ENCODE measurements at regions of chr1 and their contacts with region 1.

Region 1: DNA sequence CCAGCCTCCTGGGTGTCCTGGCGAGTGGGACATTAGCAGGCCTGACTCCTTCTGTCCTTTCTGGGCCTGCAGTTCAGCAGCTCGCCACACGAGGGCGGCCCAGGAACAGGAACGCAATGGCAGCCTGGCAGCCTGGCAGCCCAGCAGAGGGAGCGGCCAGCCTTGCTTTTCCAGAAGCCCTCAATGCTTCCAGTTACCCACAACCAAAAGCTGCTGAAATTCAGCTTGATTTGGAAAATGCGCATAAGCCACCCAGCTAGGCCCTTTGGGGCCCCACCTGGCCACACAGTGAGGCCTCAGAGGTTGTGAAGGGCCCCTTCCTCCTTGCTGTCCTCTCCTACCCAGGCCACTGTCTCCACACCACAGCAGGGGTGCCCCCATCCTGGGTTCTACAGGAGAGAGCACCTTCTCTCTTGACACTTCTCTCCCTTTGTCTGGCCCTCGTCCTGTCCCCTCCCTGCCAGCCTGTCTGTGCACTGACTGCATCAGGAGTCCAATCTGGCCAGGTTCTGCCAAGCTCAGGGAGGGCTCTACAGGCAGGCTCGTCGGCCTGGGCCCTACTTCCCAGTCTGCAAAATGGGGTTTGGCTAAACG is 103.4 kb upstream of the VAMP3 start:
- DNase-seq: peak; percentile 62
- H3K4me3 ChIP-seq: no peak overlapping the region
- H3K27ac ChIP-seq: no peak overlapping the region
- H3K4me1 ChIP-seq: peaks cover 4% of the 10 kb centered on the region
- H3K27me3 ChIP-seq: no peaks in the 10 kb centered on the region
- CTCF ChIP-seq: peak; percentile 99 to 100

Region 2: GRCh38 chr1:7630378-7630777 is 37.3 kb before region 1 on chr1:
- CTCF ChIA-PET with region 1: no interaction called
- dilution Hi-C with region 1: no loop called
- in situ Hi-C with region 1: no loop called
- intact Hi-C with region 1: no loop called
- DNase-seq: no peak
- H3K4me3 ChIP-seq: no peak overlapping the region
- H3K27ac ChIP-seq: no peak overlapping the region
- H3K4me1 ChIP-seq: no peaks in the 10 kb centered on the region
- H3K27me3 ChIP-seq: peaks cover 5% of the 10 kb centered on the region
- CTCF ChIP-seq: no peak

Region 3: DNA sequence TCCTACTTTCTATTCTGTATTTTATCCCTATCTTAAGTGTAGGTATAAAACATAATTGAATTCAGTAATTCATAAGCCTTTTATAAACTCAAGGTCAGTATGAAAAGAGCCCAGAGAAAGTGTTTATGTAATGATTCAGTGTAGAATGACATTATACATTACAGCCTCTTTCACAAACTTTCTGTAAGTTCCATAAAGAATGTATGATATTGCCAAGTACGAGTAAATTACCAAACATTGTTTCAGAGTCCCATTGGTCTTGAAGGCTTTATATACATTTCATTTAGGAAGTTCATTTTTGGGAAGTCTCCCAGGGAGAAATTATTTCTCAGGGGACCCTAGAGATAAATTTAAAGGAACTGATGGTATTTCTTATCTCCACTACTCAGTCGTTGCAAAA is 65.6 kb after region 1 on chr1:
- CTCF ChIA-PET with region 1: interaction called, 10 read pairs
- dilution Hi-C with region 1: no loop called
- in situ Hi-C with region 1: no loop called
- intact Hi-C with region 1: no loop called
- DNase-seq: no peak
- H3K4me3 ChIP-seq: no peak overlapping the region
- H3K27ac ChIP-seq: no peak overlapping the region
- H3K4me1 ChIP-seq: no peaks in the 10 kb centered on the region
- H3K27me3 ChIP-seq: no peaks in the 10 kb centered on the region
- CTCF ChIP-seq: no peak

Region 4: DNA sequence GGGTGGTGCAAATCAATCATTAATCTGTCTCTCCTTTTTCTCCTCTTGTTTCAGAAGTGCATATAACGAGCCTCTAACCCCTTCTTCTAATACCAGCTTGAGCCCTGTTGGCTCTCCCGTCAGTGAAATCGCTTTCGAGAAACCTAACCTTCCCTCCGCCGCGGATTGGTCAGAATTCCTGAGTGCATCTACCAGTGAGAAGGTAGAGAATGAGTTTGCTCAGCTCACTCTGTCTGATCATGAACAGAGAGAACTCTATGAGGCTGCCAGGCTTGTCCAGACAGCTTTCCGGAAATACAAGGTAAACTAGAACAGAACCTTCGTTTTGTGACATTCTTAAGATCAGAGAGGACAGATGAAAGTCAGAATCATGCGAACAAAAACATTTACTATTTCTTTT is 78.1 kb after region 1 on chr1:
- CTCF ChIA-PET with region 1: no interaction called
- dilution Hi-C with region 1: no loop called
- in situ Hi-C with region 1: loop called (anchors 5 kb)
- intact Hi-C with region 1: no loop called
- DNase-seq: peak; percentile 90
- H3K4me3 ChIP-seq: peak overlapping the region in 2 of 3 experiments; percentile 20 to 46
- H3K27ac ChIP-seq: peak overlapping the region; percentile 64
- H3K4me1 ChIP-seq: peaks cover 14% of the 10 kb centered on the region
- H3K27me3 ChIP-seq: no peaks in the 10 kb centered on the region
- CTCF ChIP-seq: no peak

Region 5: DNA sequence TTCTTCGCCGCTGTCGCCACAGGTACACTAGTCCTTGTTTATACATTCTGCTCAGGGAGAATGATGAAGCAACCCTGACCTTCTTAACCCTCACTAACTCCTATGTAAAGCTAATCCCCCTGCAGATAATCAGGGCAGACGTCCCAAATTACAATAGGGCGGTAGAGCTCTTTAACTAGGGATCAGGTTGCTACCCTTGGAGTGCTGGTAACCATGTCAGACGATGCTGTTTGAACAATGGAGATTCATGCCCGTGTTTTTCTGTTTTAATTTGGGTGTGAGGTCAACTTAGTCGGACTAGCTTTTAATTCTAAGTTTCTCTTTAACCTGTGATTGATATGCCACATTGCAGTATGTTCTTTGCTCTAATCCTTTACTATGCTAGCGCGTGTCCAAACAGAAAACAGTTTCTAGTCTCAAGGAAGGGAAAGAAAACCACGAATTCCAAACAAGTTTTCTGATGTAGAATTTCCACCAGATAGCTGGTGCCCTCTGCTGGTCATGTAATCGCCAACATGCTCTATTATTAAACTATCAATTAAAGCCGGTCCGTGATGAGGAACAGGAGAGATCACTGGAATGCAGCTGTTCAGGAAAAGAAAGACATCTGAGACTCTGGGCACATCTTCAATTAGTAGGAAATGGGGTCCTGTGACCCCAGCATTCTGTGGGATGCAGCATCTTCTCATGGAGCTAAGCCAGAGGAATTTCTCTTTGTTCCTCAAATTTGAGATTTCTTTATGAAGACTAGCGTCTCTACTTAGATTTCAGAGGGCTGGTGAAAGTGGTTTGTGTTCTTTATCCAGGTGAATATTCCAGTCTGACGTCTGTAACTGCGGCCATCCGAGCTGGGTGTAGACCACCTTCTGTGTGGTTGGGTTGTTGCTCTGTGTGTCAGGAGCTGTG is 85.0 kb after region 1 on chr1:
- CTCF ChIA-PET with region 1: interaction called, 21 read pairs
- dilution Hi-C with region 1: no loop called
- in situ Hi-C with region 1: loop called (anchors 5 kb)
- intact Hi-C with region 1: loop called (anchors 1 kb)
- DNase-seq: peak; percentile 51
- H3K4me3 ChIP-seq: peak overlapping the region in 2 of 3 experiments; percentile 2 to 18
- H3K27ac ChIP-seq: no peak overlapping the region
- H3K4me1 ChIP-seq: no peaks in the 10 kb centered on the region
- H3K27me3 ChIP-seq: no peaks in the 10 kb centered on the region
- CTCF ChIP-seq: peak; percentile 75 to 77

Region 6: DNA sequence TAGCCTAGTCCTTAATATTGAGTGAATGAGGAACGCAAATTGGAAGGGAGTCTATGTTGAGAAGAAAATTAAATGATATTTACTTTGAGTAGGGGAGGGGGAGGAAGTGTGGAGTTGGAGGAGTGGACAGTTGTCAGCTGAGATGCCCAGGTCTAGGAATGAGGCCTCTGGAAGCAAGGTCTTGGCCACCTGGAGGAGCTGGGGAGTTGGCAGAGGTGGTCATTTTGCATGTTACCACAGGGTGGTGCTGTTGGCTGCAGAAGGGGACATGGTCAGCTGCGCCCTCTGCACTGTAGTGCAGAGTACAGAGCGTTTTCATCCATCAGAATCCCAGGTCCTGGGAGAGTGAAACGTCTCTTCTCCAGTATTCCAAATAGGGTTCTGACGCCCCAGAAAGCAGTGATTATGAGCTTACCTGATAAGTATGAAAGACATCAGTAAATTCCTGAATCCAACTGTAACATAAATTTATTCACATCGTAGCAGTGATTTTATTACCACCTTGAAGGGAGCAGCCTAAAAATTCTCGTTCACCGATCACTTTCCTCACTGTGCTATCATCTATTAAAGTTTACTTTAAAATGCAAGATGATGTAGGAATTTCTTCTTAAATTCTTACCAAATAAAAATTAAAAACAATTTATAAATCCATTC is 307.6 kb after region 1 on chr1:
- CTCF ChIA-PET with region 1: no interaction called
- dilution Hi-C with region 1: no loop called
- in situ Hi-C with region 1: no loop called
- intact Hi-C with region 1: loop called (anchors 1 kb)
- DNase-seq: peak; percentile 75
- H3K4me3 ChIP-seq: no peak overlapping the region
- H3K27ac ChIP-seq: no peak overlapping the region
- H3K4me1 ChIP-seq: no peaks in the 10 kb centered on the region
- H3K27me3 ChIP-seq: no peaks in the 10 kb centered on the region
- CTCF ChIP-seq: peak; percentile 96 to 98

Measured in mammary epithelial cell (primary cell).